ENCODE measurements at regions of chr12 and their contacts with region 1.

Region 1: GRCh38 chr12:31589904-31590641 is 863 bp downstream of the DENND5B start:
- DNase-seq: peak; percentile 89
- ATAC-seq: peak; percentile 89
- H3K4me3 ChIP-seq: peak overlapping the region; percentile 86 to 95 (median 89)
- H3K27ac ChIP-seq: peak overlapping the region; percentile 100
- H3K4me1 ChIP-seq: peaks cover 41% of the 10 kb centered on the region
- H3K27me3 ChIP-seq: no peaks in the 10 kb centered on the region
- CTCF ChIP-seq: no peak
- EP300 ChIP-seq: peak; percentile 55 to 65; a peak in 2 of 4 replicates
- POLR2A ChIP-seq: peak; percentile 77 to 85
- RAD21 ChIP-seq: peak; percentile 66

Region 2: DNA sequence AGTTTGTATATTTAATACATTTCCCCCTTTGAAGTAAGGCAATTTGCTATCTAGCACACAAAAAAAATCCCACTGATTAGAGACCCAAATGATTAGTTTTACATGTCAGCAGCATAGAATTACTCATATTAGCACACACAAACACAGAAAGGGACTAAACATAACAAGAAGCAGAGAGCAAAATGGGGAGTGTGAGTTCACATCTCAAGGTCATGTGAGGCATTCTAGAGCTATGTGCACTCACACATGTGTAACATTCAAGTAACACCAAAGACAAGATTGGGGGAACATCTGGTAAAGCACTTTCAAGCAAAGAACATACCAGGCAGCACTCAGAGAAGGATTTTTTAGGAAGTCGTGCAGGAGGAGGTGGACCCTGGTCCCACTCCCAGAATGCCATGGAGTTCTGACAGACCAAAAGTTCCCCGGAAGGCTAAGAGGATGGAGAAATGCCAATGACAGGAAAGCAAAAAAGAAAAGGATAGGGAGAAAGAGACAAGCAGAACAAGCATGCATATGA is 158.3 kb before region 1 on chr12:
- CTCF ChIA-PET with region 1: no interaction called
- POLR2A ChIA-PET with region 1: interaction called, 3 read pairs
- in situ Hi-C with region 1: no loop called
- intact Hi-C with region 1: loop called (anchors 5 kb)
- DNase-seq: peak; percentile 15
- ATAC-seq: peak; percentile 41; the same call in 2 of the 3 replicates
- H3K4me3 ChIP-seq: no peak overlapping the region
- H3K27ac ChIP-seq: no peak overlapping the region
- H3K4me1 ChIP-seq: no peaks in the 10 kb centered on the region
- H3K27me3 ChIP-seq: no peaks in the 10 kb centered on the region
- CTCF ChIP-seq: no peak
- EP300 ChIP-seq: no peak
- POLR2A ChIP-seq: no peak
- RAD21 ChIP-seq: no peak

Region 3: DNA sequence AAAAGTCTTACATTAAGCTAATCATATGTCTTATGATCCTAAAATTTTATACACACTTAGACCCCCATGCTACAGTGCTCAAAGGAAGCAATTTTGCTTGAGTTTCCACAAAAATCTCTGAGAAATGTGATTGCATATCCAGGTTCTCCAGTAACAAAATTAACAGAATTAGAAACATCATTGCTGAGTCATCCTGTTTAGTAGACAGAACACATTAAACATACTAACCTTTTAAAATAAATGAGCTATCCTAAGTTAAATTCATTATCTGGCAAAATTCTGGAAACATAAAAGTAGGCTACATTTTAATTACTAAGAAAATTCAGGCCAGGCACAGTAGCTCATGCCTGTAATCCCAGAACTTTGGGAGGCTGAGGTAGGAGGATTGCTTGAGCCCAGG is 93.8 kb before region 1 on chr12:
- CTCF ChIA-PET with region 1: no interaction called
- POLR2A ChIA-PET with region 1: no interaction called
- in situ Hi-C with region 1: no loop called
- intact Hi-C with region 1: no loop called
- DNase-seq: no peak
- ATAC-seq: no peak
- H3K4me3 ChIP-seq: no peak overlapping the region
- H3K27ac ChIP-seq: no peak overlapping the region
- H3K4me1 ChIP-seq: no peaks in the 10 kb centered on the region
- H3K27me3 ChIP-seq: no peaks in the 10 kb centered on the region
- CTCF ChIP-seq: no peak
- EP300 ChIP-seq: no peak
- POLR2A ChIP-seq: no peak
- RAD21 ChIP-seq: no peak

Region 4: DNA sequence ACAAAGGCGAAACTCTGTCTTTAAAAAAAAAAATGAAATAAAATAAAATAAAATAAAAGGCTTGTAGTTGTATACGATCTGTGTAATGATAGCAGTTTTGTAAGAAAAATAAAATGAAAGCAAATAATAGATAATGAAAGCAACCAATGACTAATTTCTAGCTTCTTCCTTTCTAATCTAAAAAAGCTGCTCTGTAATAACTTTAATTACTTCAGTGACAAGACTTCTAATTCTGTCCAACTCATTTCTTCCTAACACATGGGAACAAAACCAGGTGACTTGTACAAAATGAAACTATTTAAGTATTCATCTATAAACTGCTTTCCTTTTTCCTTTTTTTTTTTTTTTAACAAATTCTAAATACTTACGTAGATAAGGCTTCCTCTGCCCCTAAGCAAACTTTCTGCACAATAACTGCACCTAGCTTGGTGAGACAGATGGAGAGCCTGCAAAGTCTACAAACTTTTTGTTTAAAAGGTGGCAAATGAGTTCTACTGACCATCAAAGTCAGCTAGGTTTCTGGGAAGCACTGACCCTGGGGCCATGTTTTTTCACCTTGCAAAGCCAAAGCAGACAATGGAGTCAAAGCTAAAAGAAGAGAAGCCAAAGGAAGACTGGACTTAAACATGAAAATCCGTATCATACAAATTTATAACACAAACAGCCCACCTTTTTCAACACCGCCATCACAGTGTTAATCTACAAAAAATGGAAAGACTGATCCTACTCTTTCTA is 27.3 kb before region 1 on chr12:
- CTCF ChIA-PET with region 1: no interaction called
- POLR2A ChIA-PET with region 1: no interaction called
- in situ Hi-C with region 1: no loop called
- intact Hi-C with region 1: no loop called
- DNase-seq: no peak
- ATAC-seq: no peak
- H3K4me3 ChIP-seq: no peak overlapping the region
- H3K27ac ChIP-seq: no peak overlapping the region
- H3K4me1 ChIP-seq: peaks cover 29% of the 10 kb centered on the region
- H3K27me3 ChIP-seq: no peaks in the 10 kb centered on the region
- CTCF ChIP-seq: no peak
- EP300 ChIP-seq: no peak
- POLR2A ChIP-seq: no peak
- RAD21 ChIP-seq: no peak

Region 5: GRCh38 chr12:31659087-31659933 is 69.2 kb after region 1 on chr12 and contains the start of gene ETFBKMT:
- CTCF ChIA-PET with region 1: no interaction called
- POLR2A ChIA-PET with region 1: no interaction called
- in situ Hi-C with region 1: no loop called
- intact Hi-C with region 1: no loop called
- DNase-seq: peak; percentile 90
- ATAC-seq: peak; percentile 98
- H3K4me3 ChIP-seq: peak within 1 kb of the TSS; percentile 76 to 80 (median 78)
- H3K27ac ChIP-seq: peak within 1 kb of the TSS; percentile 87
- H3K4me1 ChIP-seq: peaks cover 21% of the 10 kb centered on the region
- H3K27me3 ChIP-seq: peaks cover 0 to 8% of the 10 kb centered on the region in 2 experiments; a peak in 2 of 5 replicates
- CTCF ChIP-seq: peak; percentile 55
- EP300 ChIP-seq: no peak
- POLR2A ChIP-seq: peak; percentile 43 to 52; a peak in 2 of 4 replicates
- RAD21 ChIP-seq: peak; percentile 57; the same call in 1 of the 2 replicates
- total RNA-seq, gene ETFBKMT: 0.93 and 1.1 TPM in 2 replicates